ENCODE measurements at regions of chr1 and their contacts with region 1.

Region 1: GRCh38 chr1:35268282-35269200 is at the start of gene ZMYM4:
- DNase-seq: peak; percentile 92
- H3K4me3 ChIP-seq: peak within 1 kb of the TSS; percentile 80 to 94 (median 83)
- H3K27ac ChIP-seq: peak within 1 kb of the TSS; percentile 56
- H3K4me1 ChIP-seq: peaks cover 14% of the 10 kb centered on the region
- H3K27me3 ChIP-seq: no peaks in the 10 kb centered on the region
- CTCF ChIP-seq: no peak
- total RNA-seq, gene ZMYM4: 34.3 to 47.9 TPM

Region 2: DNA sequence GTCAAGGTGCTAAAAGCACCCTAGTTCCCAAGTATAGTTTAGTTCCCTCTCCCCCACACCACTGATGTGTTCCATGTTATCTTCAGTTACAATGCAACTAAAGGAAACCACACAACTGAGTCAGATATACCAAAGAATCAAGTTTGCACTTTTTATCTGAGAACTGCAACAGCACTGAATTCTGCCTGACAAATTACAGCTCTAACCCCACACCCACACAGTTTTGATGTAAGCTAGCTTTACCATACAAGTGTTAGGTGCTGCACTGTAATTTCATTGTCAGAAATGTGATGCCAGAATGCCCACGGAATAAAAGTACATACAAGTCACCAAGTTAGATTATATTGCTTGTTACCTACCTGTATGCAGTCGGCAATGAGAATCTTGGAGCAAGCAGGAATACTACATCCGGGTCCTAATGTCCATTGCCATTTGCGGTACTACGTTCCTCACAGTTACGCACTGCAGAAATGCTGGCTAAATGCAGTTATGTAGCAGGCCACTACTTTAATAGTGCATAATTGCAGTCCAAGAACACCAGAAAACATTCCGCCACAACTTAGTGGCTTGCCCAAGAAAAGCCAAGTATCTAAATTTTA is 87.7 kb before region 1 on chr1:
- CTCF ChIA-PET with region 1: no interaction called
- dilution Hi-C with region 1: loop called (anchors 10 kb)
- in situ Hi-C with region 1: no loop called
- intact Hi-C with region 1: no loop called
- DNase-seq: no peak
- H3K4me3 ChIP-seq: no peak overlapping the region
- H3K27ac ChIP-seq: no peak overlapping the region
- H3K4me1 ChIP-seq: no peaks in the 10 kb centered on the region
- H3K27me3 ChIP-seq: no peaks in the 10 kb centered on the region
- CTCF ChIP-seq: no peak

Region 3: GRCh38 chr1:35202048-35202719 is 66.4 kb before region 1 on chr1:
- CTCF ChIA-PET with region 1: no interaction called
- dilution Hi-C with region 1: loop called (anchors 5 kb)
- in situ Hi-C with region 1: no loop called
- intact Hi-C with region 1: no loop called
- DNase-seq: peak; percentile 70
- H3K4me3 ChIP-seq: no peak overlapping the region
- H3K27ac ChIP-seq: no peak overlapping the region
- H3K4me1 ChIP-seq: no peaks in the 10 kb centered on the region
- H3K27me3 ChIP-seq: no peaks in the 10 kb centered on the region
- CTCF ChIP-seq: peak; percentile 86 to 93

Region 4: GRCh38 chr1:35319988-35320713 is 51.6 kb after region 1 on chr1:
- CTCF ChIA-PET with region 1: no interaction called
- dilution Hi-C with region 1: loop called (anchors 5 kb)
- in situ Hi-C with region 1: no loop called
- intact Hi-C with region 1: no loop called
- DNase-seq: peak; percentile 29
- H3K4me3 ChIP-seq: no peak overlapping the region
- H3K27ac ChIP-seq: no peak overlapping the region
- H3K4me1 ChIP-seq: no peaks in the 10 kb centered on the region
- H3K27me3 ChIP-seq: no peaks in the 10 kb centered on the region
- CTCF ChIP-seq: no peak

Region 5: GRCh38 chr1:35369922-35370671 is 101.6 kb after region 1 on chr1:
- CTCF ChIA-PET with region 1: no interaction called
- dilution Hi-C with region 1: no loop called
- in situ Hi-C with region 1: no loop called
- intact Hi-C with region 1: no loop called
- DNase-seq: no peak
- H3K4me3 ChIP-seq: no peak overlapping the region
- H3K27ac ChIP-seq: no peak overlapping the region
- H3K4me1 ChIP-seq: no peaks in the 10 kb centered on the region
- H3K27me3 ChIP-seq: no peaks in the 10 kb centered on the region
- CTCF ChIP-seq: no peak

Region 6: GRCh38 chr1:35470977-35471613 is 202.6 kb after region 1 on chr1:
- CTCF ChIA-PET with region 1: no interaction called
- dilution Hi-C with region 1: no loop called
- in situ Hi-C with region 1: no loop called
- intact Hi-C with region 1: no loop called
- DNase-seq: no peak
- H3K4me3 ChIP-seq: no peak overlapping the region
- H3K27ac ChIP-seq: no peak overlapping the region
- H3K4me1 ChIP-seq: peaks cover 6% of the 10 kb centered on the region
- H3K27me3 ChIP-seq: no peaks in the 10 kb centered on the region
- CTCF ChIP-seq: no peak

Measured in mammary epithelial cell (primary cell).